ENCODE measurements at regions of chr16 and their contacts with region 1.

Region 1: DNA sequence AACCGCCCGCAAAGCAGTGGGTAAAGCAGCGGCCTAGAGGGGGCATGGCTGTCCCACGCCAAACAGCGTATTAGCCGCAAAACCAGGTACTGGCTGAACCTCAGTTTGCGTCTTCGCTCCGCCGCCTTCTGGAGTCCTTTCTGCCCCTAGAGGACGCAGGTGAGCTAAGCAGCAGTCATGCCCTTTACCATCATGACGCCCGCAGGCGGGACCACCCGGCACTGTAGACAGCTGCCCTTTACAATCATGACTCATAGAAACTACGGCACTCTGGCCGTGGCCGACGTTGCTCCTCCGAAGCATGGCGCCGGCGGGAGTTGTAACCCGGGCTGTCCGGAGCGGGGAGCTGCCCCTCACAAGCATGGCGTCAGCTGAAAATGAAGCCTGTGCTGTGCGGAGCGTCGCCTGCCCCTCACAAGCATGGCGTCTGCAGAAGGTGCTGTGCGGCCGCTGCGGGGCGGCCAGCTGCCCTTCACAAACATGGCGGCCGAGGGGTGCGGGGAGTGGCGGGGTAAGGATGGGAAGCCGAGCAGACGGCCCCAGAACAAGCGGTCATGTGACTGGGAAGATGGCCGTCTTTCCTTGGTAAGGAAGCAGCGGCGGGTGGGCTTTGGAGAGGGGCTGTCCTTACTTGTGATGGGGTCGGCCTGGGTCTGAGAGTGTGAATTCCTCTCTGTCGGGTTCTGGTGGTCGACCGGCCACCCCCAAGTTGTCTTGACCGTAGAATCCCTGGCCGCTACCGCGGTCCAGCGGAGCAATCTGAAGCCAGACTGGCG is at the start of gene VPS35L:
- DNase-seq: peak; percentile 98 to 99
- ATAC-seq: peak; percentile 97 to 99
- H3K4me3 ChIP-seq: peak within 1 kb of the TSS; percentile 89
- H3K27ac ChIP-seq: peak within 1 kb of the TSS; percentile 91 to 93
- H3K4me1 ChIP-seq: peaks cover 10% of the 10 kb centered on the region; the same call in 1 of the 3 replicates
- CTCF ChIP-seq: peak; percentile 78
- EP300 ChIP-seq: no peak
- POLR2A ChIP-seq: peak; percentile 70
- RAD21 ChIP-seq: peak; percentile 44 to 48
- polyA plus RNA-seq, gene VPS35L: 47.7 and 59.0 TPM in 2 replicates

Region 2: GRCh38 chr16:19400697-19401096 is 154.7 kb before region 1 on chr16:
- CTCF ChIA-PET with region 1: no interaction called
- POLR2A ChIA-PET with region 1: no interaction called
- DNase-seq: no peak
- ATAC-seq: no peak
- H3K4me3 ChIP-seq: no peak overlapping the region
- H3K27ac ChIP-seq: no peak overlapping the region
- H3K4me1 ChIP-seq: peaks cover 19% of the 10 kb centered on the region
- CTCF ChIP-seq: 0 out of 3 replicates have a peak, but pooled peaks have one; percentile 6
- EP300 ChIP-seq: no peak
- POLR2A ChIP-seq: no peak
- RAD21 ChIP-seq: peak in 1 of 2 experiments; percentile 48; a peak in 2 of 5 replicates

Region 3: DNA sequence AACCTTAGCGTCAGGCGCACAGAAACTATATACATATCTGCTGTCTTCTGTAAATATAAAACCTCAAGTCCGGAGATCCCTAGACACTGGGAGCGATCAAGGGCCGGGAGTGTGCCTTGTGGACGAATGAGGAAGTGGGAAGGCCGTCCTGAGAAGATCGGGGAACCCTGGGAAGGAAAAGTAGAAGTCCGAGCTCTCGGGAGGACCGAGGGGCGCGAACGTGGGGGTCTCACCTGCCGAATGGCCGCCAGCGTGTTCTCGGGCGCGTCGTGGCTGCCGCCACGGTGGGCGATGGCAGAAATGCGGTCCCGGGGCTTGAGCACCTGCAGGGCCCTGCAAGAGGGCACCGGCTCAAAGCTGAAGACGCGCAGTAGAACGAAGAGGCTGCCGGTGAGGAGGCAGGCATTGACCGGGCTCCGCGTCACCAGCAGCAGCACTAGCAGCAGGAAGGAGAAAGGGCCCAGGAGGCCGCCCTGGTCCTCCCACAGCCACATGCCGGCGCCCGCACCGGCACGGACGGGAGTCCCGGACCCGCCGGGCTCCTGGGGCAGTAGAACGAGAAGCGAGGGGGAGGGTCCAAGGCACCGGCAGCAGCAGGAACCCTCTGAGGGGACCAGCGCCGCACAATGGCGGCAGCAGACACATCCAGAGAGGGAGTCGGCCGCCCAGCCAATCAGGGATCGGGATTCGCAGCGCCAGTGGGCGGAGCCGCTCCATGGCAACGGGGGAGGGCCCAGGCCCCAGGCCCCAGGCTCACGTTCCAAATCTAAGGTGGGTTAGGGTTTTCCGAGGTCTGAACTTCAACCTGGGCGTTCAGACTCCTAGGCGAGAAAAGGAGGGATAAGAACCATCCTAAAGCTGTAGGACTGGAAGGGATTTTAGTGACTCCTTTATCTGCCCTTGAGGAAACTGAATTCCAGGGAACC is 33.6 kb before region 1 on chr16 and contains the start of gene GDE1:
- CTCF ChIA-PET with region 1: interaction called, 17 read pairs
- POLR2A ChIA-PET with region 1: interaction called, 15 read pairs
- DNase-seq: peak; percentile 90 to 94
- ATAC-seq: peak; percentile 88 to 91
- H3K4me3 ChIP-seq: peak within 1 kb of the TSS; percentile 74
- H3K27ac ChIP-seq: peak within 1 kb of the TSS; percentile 85 to 96
- H3K4me1 ChIP-seq: peaks cover 64% of the 10 kb centered on the region
- CTCF ChIP-seq: no peak
- EP300 ChIP-seq: no peak
- POLR2A ChIP-seq: peak; percentile 87
- RAD21 ChIP-seq: no peak
- polyA plus RNA-seq, gene GDE1: 81.6 and 85.2 TPM in 2 replicates

Region 4: GRCh38 chr16:19567560-19567959 is 12.2 kb after region 1 on chr16:
- CTCF ChIA-PET with region 1: interaction called, 18 read pairs
- POLR2A ChIA-PET with region 1: no interaction called
- DNase-seq: no peak
- ATAC-seq: no peak
- H3K4me3 ChIP-seq: no peak overlapping the region
- H3K27ac ChIP-seq: no peak overlapping the region
- H3K4me1 ChIP-seq: no peaks in the 10 kb centered on the region
- CTCF ChIP-seq: no peak
- EP300 ChIP-seq: no peak
- POLR2A ChIP-seq: no peak
- RAD21 ChIP-seq: no peak

Region 5: DNA sequence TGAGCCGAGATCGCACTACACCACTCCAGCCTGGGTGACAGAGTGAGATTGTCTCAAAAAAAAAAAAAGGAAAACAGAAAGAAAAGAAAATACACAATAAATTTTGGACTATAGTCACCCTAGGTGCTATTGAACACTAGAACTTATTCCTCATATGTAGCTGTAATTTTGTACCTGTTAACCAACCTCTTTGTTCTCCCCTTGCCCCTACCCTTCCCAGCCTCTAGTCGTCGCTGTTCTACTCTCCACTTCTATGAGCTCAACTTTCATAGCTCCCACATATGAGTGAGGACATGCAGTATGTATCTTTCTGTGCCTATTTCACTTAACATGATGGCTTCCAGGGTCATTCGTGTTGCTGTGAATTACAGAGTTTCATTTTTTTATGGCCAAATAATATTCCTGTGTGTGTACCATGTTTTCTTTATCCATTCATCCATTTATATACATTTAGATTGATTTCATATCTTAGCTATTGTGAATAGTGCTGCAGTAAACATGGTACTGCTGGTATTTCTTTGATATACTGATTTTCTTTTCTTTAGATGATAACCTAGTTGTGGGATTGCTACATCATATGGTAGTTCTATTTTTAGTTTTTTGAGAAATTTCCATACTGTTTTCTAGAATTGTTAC is 28.4 kb after region 1 on chr16:
- CTCF ChIA-PET with region 1: interaction called, 14 read pairs
- POLR2A ChIA-PET with region 1: interaction called, 7 read pairs
- DNase-seq: peak; percentile 30 to 68
- ATAC-seq: peak; percentile 95 to 97; a peak in 5 of 6 replicates
- H3K4me3 ChIP-seq: no peak overlapping the region
- H3K27ac ChIP-seq: no peak overlapping the region
- H3K4me1 ChIP-seq: no peaks in the 10 kb centered on the region
- CTCF ChIP-seq: peak; percentile 92
- EP300 ChIP-seq: no peak
- POLR2A ChIP-seq: no peak
- RAD21 ChIP-seq: peak; percentile 56 to 70

Region 6: DNA sequence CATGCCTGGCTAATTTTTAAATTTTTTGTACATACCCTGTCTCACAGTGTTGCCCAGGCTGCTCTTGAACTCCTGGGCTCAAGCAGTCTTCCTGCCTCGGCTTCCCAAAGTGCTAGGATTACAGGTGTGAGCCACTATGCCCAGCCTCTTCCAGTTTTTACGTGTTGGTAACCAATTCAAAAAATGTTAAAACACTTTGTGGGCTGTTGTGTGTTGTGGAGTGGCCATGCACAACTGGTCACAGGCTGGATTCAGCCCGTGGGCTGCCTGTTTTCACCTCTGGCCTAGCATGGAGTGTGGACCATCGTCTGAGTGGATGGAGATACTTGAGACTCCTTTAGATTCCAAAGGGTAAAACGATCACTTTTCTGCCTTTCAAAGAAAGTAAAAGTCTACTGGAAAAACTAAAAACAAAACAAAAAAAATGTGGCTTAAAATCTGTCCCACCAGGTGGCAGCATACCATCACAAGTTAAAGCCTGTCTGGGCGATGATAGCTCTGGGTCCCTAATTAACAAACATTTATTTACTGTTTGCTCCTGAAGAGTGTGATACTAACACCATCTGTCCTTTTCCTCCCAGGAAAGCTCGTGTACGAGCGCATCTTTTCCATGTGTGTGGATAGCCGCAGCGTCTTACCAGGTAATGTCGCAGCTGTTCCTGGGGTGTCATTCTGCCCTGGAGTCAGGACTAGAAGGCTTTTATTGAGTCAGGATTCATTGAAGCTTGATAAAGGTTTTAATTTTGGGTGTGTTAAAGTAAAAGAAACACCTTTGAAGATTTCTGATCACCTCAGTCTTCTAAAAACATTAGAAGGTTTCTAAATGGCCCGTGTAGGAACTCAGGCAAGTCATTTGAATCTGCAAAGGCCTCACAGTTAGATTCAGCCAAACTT is 46.0 kb after region 1 on chr16:
- CTCF ChIA-PET with region 1: interaction called, 26 read pairs
- POLR2A ChIA-PET with region 1: no interaction called
- DNase-seq: peak; percentile 41 to 42
- ATAC-seq: peak; percentile 56 to 58; a peak in 4 of 6 replicates
- H3K4me3 ChIP-seq: no peak overlapping the region
- H3K27ac ChIP-seq: peak overlapping the region in 1 of 2 experiments; percentile 43; a peak in 3 of 6 replicates
- H3K4me1 ChIP-seq: peaks cover 14% of the 10 kb centered on the region
- CTCF ChIP-seq: peak; percentile 88
- EP300 ChIP-seq: no peak
- POLR2A ChIP-seq: no peak
- RAD21 ChIP-seq: peak; percentile 89 to 92